ENCODE measurements at regions of chr17 and their contacts with region 1.

Region 1: GRCh38 chr17:409848-410545 is 57.4 kb upstream of the RPH3AL start:
- DNase-seq: peak; percentile 100
- H3K4me3 ChIP-seq: peak overlapping the region; percentile 4 to 90 (median 41)
- H3K27ac ChIP-seq: peak overlapping the region; percentile 4
- H3K4me1 ChIP-seq: peaks cover 5% of the 10 kb centered on the region
- H3K27me3 ChIP-seq: no peaks in the 10 kb centered on the region
- CTCF ChIP-seq: no peak
- POLR2A ChIP-seq: peak; percentile 75

Region 2: GRCh38 chr17:364308-364707 is 45.7 kb before region 1 on chr17:
- CTCF ChIA-PET with region 1: no interaction called
- POLR2A ChIA-PET with region 1: no interaction called
- dilution Hi-C with region 1: no loop called
- intact Hi-C with region 1: no loop called
- DNase-seq: no peak
- H3K4me3 ChIP-seq: no peak overlapping the region
- H3K27ac ChIP-seq: no peak overlapping the region
- H3K4me1 ChIP-seq: no peaks in the 10 kb centered on the region
- H3K27me3 ChIP-seq: no peaks in the 10 kb centered on the region
- CTCF ChIP-seq: no peak
- POLR2A ChIP-seq: no peak

Region 3: DNA sequence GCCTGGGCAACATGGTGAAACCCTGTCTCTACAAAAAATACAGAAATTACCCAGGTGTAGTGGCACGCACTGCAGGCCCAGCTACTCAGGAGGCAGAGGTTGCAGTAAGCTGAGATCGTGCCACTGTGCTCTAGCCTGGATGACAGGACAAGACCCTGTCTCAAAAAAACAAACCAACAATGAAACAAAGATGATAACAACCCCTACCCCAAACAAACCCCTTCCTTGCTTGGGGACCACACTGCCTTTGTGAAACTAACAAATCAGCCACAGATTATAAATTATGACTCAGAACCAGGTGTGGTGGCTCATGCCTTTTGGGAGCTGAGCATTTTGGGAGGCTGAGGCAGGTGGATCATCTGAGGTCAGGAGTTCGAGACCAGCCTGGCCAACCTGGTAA is 17.9 kb after region 1 on chr17:
- CTCF ChIA-PET with region 1: interaction called, 23 read pairs
- POLR2A ChIA-PET with region 1: no interaction called
- dilution Hi-C with region 1: no loop called
- intact Hi-C with region 1: no loop called
- DNase-seq: no peak
- H3K4me3 ChIP-seq: no peak overlapping the region
- H3K27ac ChIP-seq: no peak overlapping the region
- H3K4me1 ChIP-seq: no peaks in the 10 kb centered on the region
- H3K27me3 ChIP-seq: no peaks in the 10 kb centered on the region
- CTCF ChIP-seq: no peak
- POLR2A ChIP-seq: no peak

Region 4: GRCh38 chr17:538181-538973 is 128.4 kb after region 1 on chr17:
- CTCF ChIA-PET with region 1: interaction called, 15 read pairs
- POLR2A ChIA-PET with region 1: no interaction called
- dilution Hi-C with region 1: no loop called
- intact Hi-C with region 1: no loop called
- DNase-seq: peak; percentile 75
- H3K4me3 ChIP-seq: no peak overlapping the region
- H3K27ac ChIP-seq: no peak overlapping the region
- H3K4me1 ChIP-seq: peaks cover 24% of the 10 kb centered on the region
- H3K27me3 ChIP-seq: no peaks in the 10 kb centered on the region
- CTCF ChIP-seq: no peak
- POLR2A ChIP-seq: no peak

Region 5: GRCh38 chr17:622356-622755 is 212.4 kb after region 1 on chr17:
- CTCF ChIA-PET with region 1: interaction called, 11 read pairs
- POLR2A ChIA-PET with region 1: no interaction called
- dilution Hi-C with region 1: no loop called
- intact Hi-C with region 1: no loop called
- DNase-seq: peak; percentile 55
- H3K4me3 ChIP-seq: no peak overlapping the region
- H3K27ac ChIP-seq: no peak overlapping the region
- H3K4me1 ChIP-seq: peaks cover 8% of the 10 kb centered on the region
- H3K27me3 ChIP-seq: no peaks in the 10 kb centered on the region
- CTCF ChIP-seq: no peak
- POLR2A ChIP-seq: no peak

Region 6: GRCh38 chr17:640436-640835 is 230.4 kb after region 1 on chr17:
- CTCF ChIA-PET with region 1: no interaction called
- POLR2A ChIA-PET with region 1: no interaction called
- dilution Hi-C with region 1: no loop called
- intact Hi-C with region 1: no loop called
- DNase-seq: no peak
- H3K4me3 ChIP-seq: no peak overlapping the region
- H3K27ac ChIP-seq: no peak overlapping the region
- H3K4me1 ChIP-seq: no peaks in the 10 kb centered on the region
- H3K27me3 ChIP-seq: no peaks in the 10 kb centered on the region
- CTCF ChIP-seq: no peak
- POLR2A ChIP-seq: no peak

Region 7: DNA sequence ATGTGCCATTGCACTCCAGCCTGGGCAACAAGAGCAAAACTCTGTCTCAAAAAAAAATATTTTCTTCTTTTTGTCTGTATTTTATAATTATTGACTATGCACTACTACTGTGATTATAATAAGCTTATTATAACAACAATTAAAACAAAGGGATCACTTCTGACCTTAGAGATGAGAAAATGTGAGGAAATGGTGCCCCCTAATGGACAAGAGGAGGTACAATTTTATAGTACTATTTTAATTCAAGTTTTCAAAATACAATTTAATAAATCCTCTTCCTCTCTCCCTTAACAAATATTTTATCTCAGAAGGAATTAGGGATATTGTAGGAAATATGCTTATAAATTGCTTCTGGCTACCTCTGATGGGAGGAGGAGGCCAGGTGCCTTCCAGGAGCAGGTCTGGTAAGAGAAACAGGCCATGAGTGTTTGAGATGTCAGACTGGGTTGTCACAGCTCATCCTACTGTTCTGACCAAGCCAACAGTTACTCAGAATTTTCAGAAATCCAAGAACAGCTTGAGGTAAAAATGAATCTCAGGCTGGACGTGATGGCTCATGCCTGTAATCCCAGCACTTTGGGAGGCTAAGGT is 290.6 kb after region 1 on chr17:
- CTCF ChIA-PET with region 1: interaction called, 762 read pairs
- POLR2A ChIA-PET with region 1: interaction called, 8 read pairs
- dilution Hi-C with region 1: no loop called
- intact Hi-C with region 1: loop called (anchors 1 kb)
- DNase-seq: peak; percentile 40
- H3K4me3 ChIP-seq: no peak overlapping the region
- H3K27ac ChIP-seq: no peak overlapping the region
- H3K4me1 ChIP-seq: peaks cover 13% of the 10 kb centered on the region
- H3K27me3 ChIP-seq: no peaks in the 10 kb centered on the region
- CTCF ChIP-seq: peak; percentile 19 to 23
- POLR2A ChIP-seq: no peak

Region 8: DNA sequence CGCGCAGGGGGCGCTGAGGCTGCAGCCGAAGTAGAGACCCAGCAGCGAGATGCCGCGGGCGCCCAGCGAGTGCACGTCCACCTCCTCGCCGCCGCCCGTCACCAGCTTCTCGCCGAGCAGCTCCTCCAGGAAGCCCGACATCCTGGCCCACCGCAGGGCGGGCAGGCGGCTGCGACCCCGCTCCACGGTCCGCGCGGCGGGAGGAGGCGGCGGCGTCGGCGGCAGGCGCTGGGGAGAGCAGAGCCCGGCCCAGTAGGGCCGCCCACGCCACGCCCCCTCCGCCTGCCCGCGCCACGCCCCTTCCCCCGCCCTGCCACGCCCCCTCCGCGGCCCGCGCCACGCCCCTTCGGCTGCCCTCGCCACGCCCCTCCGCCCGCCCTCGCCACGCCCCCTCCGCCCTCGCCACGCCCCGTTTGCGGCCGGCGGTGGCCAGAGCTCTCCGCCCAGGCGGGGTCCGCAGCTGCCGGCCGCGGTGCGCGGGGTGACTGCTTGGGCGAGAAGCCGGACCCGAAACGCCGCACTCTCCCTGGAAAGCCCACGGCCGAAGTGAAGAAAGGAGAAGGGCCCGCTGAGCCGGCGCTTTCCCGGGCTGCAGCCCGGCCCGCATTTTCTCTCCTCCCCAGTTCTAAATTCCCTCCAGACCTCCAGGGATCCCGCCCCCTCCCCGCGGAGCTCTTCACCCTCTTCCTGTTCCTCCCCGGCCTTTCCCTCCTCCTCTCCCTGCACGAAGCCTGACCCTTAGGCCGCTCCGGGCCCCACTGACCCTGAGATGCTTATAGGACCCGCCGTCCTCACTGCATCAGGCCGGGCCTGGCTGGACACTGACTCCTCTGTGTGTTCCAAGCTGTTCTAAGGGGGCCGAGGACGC is 569.8 kb after region 1 on chr17 and contains the start of gene NXN:
- CTCF ChIA-PET with region 1: interaction called, 36 read pairs
- POLR2A ChIA-PET with region 1: no interaction called
- dilution Hi-C with region 1: no loop called
- intact Hi-C with region 1: loop called (anchors 2 kb)
- DNase-seq: peak; percentile 80
- H3K4me3 ChIP-seq: peak within 1 kb of the TSS; percentile 84 to 93 (median 91)
- H3K27ac ChIP-seq: no peak within 1 kb of the TSS
- H3K4me1 ChIP-seq: peaks cover 21% of the 10 kb centered on the region
- H3K27me3 ChIP-seq: no peaks in the 10 kb centered on the region
- CTCF ChIP-seq: peak in 1 of 2 donors; percentile 45
- POLR2A ChIP-seq: peak; percentile 82
- total RNA-seq, gene NXN: 58.9 and 77.3 TPM in 2 replicates

Measured in endothelial cell of umbilical vein (primary cell).